Activated CD4-positive, alpha-beta T cell treated with anti-CD3 and anti-CD28 coated beads for 36 hours (primary cell): ENCODE measurements at regions of chr1 and their contacts with region 1.

Region 1: DNA sequence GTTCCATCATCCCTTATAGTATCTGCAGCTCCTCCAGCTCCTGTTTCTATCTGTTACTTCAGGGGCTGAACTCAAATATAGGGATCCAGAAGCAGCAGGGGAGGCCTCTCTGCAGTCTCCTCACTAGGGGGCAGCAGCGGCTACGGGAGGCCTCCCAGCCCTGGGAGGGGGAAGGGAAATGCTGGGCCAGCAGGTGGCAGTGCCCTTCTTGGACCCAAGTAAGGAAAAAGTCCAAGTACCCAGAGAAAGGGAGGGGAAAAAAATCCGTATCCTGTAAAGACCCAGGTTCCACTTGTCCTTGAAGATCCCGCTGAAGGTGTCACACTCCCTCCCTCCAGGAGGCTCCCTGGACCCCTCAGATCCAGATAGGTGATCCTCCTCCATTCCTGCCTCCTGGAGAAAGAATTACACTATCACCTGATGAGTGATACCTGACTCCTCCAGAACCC is 14.1 kb upstream of the NUAK2 start:
- DNase-seq: peak; percentile 92
- ATAC-seq: peak; percentile 96
- H3K4me3 Mint-ChIP-seq: no peak overlapping the region
- H3K27ac Mint-ChIP-seq: no peak overlapping the region
- H3K4me1 Mint-ChIP-seq: no peaks in the 10 kb centered on the region
- H3K27me3 Mint-ChIP-seq: no peaks in the 10 kb centered on the region

Region 2: GRCh38 chr1:205255941-205256780 is 79.5 kb before region 1 on chr1:
- CTCF ChIA-PET with region 1: no interaction called
- POLR2A ChIA-PET with region 1: no interaction called
- intact Hi-C with region 1: no loop called
- DNase-seq: peak; percentile 93
- ATAC-seq: peak; percentile 95
- H3K4me3 Mint-ChIP-seq: no peak overlapping the region
- H3K27ac Mint-ChIP-seq: no peak overlapping the region
- H3K4me1 Mint-ChIP-seq: peaks cover 2% of the 10 kb centered on the region
- H3K27me3 Mint-ChIP-seq: no peaks in the 10 kb centered on the region

Region 3: GRCh38 chr1:205321164-205321958 is 14.3 kb before region 1 on chr1 and contains the start of gene NUAK2:
- CTCF ChIA-PET with region 1: interaction called, 39 read pairs
- POLR2A ChIA-PET with region 1: interaction called, 3 read pairs
- intact Hi-C with region 1: no loop called
- DNase-seq: peak; percentile 90
- ATAC-seq: peak; percentile 85
- H3K4me3 Mint-ChIP-seq: peak within 1 kb of the TSS; percentile 88
- H3K27ac Mint-ChIP-seq: peak within 1 kb of the TSS; percentile 90
- H3K4me1 Mint-ChIP-seq: peaks cover 65% of the 10 kb centered on the region
- H3K27me3 Mint-ChIP-seq: no peaks in the 10 kb centered on the region
- total RNA-seq, gene NUAK2: 2.3 to 2.7 TPM

Region 4: GRCh38 chr1:205348881-205349477 is 13.3 kb after region 1 on chr1:
- CTCF ChIA-PET with region 1: interaction called, 33 read pairs
- POLR2A ChIA-PET with region 1: no interaction called
- intact Hi-C with region 1: no loop called
- DNase-seq: no peak
- ATAC-seq: no peak
- H3K4me3 Mint-ChIP-seq: no peak overlapping the region
- H3K27ac Mint-ChIP-seq: no peak overlapping the region
- H3K4me1 Mint-ChIP-seq: peaks cover 5% of the 10 kb centered on the region
- H3K27me3 Mint-ChIP-seq: peaks cover 20% of the 10 kb centered on the region

Region 5: DNA sequence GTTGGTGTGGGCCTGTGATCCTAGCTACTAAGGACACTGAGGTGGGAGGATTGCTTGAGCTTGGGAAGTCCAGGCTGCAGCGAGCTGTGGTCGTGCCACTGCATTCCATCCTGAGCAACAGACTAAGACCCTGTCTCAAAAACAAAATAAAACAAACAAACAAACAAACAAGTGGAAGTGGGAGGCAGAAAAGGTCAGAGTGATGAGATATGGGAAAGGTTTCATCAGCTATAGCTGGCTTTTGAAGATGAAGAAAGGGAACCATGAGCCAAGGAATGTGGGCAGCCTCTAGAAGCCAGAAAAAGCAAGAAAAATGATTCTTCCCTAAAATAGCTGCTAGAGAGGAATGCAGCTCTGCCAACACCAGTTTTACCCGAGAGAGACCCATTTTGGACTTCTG is 424.9 kb after region 1 on chr1:
- CTCF ChIA-PET with region 1: no interaction called
- POLR2A ChIA-PET with region 1: no interaction called
- intact Hi-C with region 1: no loop called
- DNase-seq: no peak
- ATAC-seq: no peak
- H3K4me3 Mint-ChIP-seq: no peak overlapping the region
- H3K27ac Mint-ChIP-seq: no peak overlapping the region
- H3K4me1 Mint-ChIP-seq: peaks cover 18% of the 10 kb centered on the region
- H3K27me3 Mint-ChIP-seq: no peaks in the 10 kb centered on the region

Region 6: GRCh38 chr1:205812878-205813754 is 477.4 kb after region 1 on chr1 and contains the start of gene SLC41A1:
- CTCF ChIA-PET with region 1: no interaction called
- POLR2A ChIA-PET with region 1: no interaction called
- intact Hi-C with region 1: no loop called
- DNase-seq: peak; percentile 94
- ATAC-seq: peak; percentile 96
- H3K4me3 Mint-ChIP-seq: peak within 1 kb of the TSS; percentile 81
- H3K27ac Mint-ChIP-seq: peak within 1 kb of the TSS; percentile 84
- H3K4me1 Mint-ChIP-seq: peaks cover 47% of the 10 kb centered on the region
- H3K27me3 Mint-ChIP-seq: no peaks in the 10 kb centered on the region
- total RNA-seq, gene SLC41A1: 34.4 to 41.5 TPM